Left colon (tissue), 2 donors: ENCODE measurements at regions of chr10 and their contacts with region 1.

Region 1: GRCh38 chr10:95601116-95601719 is 40.0 kb upstream of the SORBS1 start:
- DNase-seq: peak; percentile 82 to 85
- ATAC-seq: peak; percentile 96

Region 2: GRCh38 chr10:95374597-95375209 is 226.5 kb before region 1 on chr10:
- intact Hi-C with region 1: loop called in 1 of 2 experiments (anchors 2 kb)
- DNase-seq: peak; percentile 71 to 81
- ATAC-seq: peak; percentile 97

Region 3: GRCh38 chr10:95430231-95430951 is 170.8 kb before region 1 on chr10:
- intact Hi-C with region 1: loop called (anchors 5 to 10 kb)
- DNase-seq: peak; percentile 35 to 43
- ATAC-seq: peak; percentile 86

Region 4: GRCh38 chr10:95767884-95768556 is 166.8 kb after region 1 on chr10:
- intact Hi-C with region 1: no loop called
- DNase-seq: peak in 1 of 2 donors; percentile 20
- ATAC-seq: no peak